Sigmoid colon (tissue), 7 donors: ENCODE measurements at regions of chr6 and their contacts with region 1.

Region 1: GRCh38 chr6:136792410-136793262 is at the start of gene MAP3K5:
- DNase-seq: peak; percentile 95
- H3K4me3 ChIP-seq: peak within 1 kb of the TSS; percentile 51 to 69 (median 66)
- H3K27ac ChIP-seq: peak within 1 kb of the TSS; percentile 74 to 97 (median 82)
- H3K4me1 ChIP-seq: peaks cover 0 to 26% (median 12%) of the 10 kb centered on the region in 4 donors
- H3K27me3 ChIP-seq: no peaks in the 10 kb centered on the region
- CTCF ChIP-seq: peak; percentile 55 to 70 (median 63)
- EP300 ChIP-seq: no peak
- POLR2A ChIP-seq: no peak
- total RNA-seq, gene MAP3K5: 8.9 to 17.8 (median 10.3) TPM

Region 2: GRCh38 chr6:136582711-136583471 is 209.7 kb before region 1 on chr6:
- intact Hi-C with region 1: loop called (anchors 1 kb)
- DNase-seq: no peak
- H3K4me3 ChIP-seq: no peak overlapping the region
- H3K27ac ChIP-seq: peak overlapping the region; percentile 24 to 64 (median 48)
- H3K4me1 ChIP-seq: peaks cover 0 to 12% (median 5%) of the 10 kb centered on the region in 4 donors
- H3K27me3 ChIP-seq: no peaks in the 10 kb centered on the region
- CTCF ChIP-seq: peak; percentile 35 to 54 (median 42)
- EP300 ChIP-seq: no peak
- POLR2A ChIP-seq: no peak

Region 3: DNA sequence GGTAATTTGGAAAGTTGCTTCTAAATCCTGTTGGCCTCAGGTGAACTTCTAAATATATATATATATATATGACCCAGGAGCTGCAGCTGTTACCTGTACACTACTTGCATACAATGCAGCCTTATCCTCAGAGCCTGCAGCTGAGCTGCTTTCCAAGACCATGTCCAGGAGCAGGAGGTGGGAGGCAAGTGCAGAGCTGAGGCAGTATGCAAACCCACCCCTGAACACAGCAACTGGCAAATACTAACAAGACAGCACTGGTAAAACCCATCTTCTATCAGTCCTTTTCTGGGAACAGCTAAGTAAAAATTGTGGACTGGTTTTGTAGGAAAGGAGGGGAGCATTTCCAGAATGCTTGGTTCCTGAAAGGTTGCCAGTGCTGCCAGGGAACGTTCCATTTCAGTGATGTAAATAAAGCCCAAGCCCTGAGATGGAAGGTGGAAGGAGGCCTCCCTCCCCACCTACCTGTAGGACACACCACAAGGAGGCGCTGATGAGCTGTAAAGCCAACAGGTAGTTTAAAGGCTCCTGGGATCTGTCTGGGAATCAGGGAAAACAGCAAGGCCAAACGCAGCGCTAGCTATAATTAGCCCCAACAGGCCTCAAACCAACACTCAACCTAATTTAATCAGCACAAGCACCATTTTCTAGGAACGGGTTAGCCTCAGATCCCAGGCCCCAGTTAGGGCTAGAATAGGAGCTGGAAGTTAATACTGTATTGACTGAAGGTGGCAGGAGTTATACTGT is 148.6 kb before region 1 on chr6:
- intact Hi-C with region 1: loop called (anchors 1 kb)
- DNase-seq: peak; percentile 91
- H3K4me3 ChIP-seq: no peak overlapping the region
- H3K27ac ChIP-seq: peak overlapping the region in 3 of 4 donors; percentile 38 to 73 (median 54)
- H3K4me1 ChIP-seq: peaks cover 0 to 28% (median 17%) of the 10 kb centered on the region in 4 donors
- H3K27me3 ChIP-seq: no peaks in the 10 kb centered on the region
- CTCF ChIP-seq: peak; percentile 44 to 78 (median 61)
- EP300 ChIP-seq: no peak
- POLR2A ChIP-seq: no peak